ENCODE measurements at regions of chr18 and their contacts with region 1.

Region 1: DNA sequence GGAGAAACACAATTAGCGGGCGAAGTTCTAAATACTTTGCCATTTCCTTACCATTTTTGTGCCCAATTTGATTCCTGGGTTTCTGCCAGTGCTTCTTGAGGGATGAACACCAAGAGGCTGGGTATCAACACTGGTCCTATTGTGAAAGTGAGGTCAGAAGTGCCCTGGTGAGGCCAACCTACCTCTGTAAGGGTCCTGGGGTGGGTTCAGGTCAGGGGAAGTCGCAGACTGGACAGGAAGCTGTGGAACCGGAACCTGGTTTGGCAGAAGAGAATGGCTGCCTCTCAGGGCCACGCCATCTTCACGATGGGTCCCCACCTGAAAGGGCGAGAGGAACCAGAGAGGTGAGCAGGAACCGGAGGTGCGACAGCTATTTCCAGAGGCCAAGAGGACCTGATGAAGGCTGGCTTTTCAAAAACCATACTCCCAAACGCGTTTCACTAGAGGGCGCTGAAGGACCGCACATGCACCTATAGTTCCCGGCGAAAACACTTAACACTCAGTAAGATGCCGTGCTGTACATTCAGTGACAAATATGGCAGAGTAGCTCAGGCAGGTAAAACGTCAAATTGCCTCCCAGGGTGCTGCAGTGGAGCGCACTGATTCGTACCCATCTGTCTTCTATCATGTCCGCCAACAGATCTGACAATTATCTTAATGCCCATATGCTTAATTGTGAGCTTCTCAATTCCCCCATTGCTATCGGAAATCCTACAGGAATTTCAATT is 275.3 kb upstream of the CCDC68 start:
- DNase-seq: no peak
- H3K4me3 ChIP-seq: no peak overlapping the region
- H3K27me3 ChIP-seq: no peaks in the 10 kb centered on the region
- CTCF ChIP-seq: peak; percentile 86

Region 2: DNA sequence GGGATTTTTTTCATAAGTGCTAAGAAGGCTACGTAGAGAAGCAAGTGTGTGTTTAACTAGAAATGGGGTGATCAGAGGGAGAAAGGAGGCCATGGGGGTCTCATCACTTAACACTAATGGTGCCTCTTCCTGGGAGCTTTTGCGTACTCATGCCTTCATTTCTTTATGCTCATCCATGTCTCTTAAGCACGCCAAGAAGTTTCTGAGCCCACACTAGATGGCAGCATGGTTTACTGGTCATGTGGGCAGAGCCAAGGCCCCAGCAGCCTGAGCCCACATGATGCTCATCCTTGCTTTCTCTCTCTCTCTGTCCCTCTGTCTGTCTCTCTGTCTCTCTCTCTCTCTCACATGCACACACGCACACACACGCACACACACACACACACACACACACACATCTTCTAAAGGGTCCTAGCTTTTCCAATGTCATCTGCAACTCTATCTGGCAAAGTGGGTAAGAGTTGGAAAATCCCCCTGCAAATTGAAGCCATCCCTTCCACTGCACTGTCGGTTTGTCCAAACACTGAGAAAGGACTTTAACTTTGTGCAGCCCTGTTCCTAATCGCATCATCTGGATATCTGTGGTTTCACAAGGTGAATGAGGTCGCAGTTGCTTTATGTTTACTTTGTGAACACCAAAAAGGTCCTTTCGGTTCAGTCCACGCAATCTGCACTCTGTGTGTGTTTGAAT is 138.1 kb before region 1 on chr18:
- CTCF ChIA-PET with region 1: interaction called, 13 read pairs
- POLR2A ChIA-PET with region 1: no interaction called
- DNase-seq: peak; percentile 54
- H3K4me3 ChIP-seq: peak overlapping the region; percentile 3; the same call in 1 of the 2 replicates
- H3K27me3 ChIP-seq: 0 out of 2 replicates have a peak, but pooled peaks cover 4% of the 10 kb centered on the region
- CTCF ChIP-seq: peak; percentile 72

Region 3: GRCh38 chr18:55268151-55268601 is 33.6 kb after region 1 on chr18:
- CTCF ChIA-PET with region 1: interaction called, 15 read pairs
- POLR2A ChIA-PET with region 1: no interaction called
- DNase-seq: no peak
- H3K4me3 ChIP-seq: no peak overlapping the region
- H3K27me3 ChIP-seq: no peaks in the 10 kb centered on the region
- CTCF ChIP-seq: no peak

Region 4: DNA sequence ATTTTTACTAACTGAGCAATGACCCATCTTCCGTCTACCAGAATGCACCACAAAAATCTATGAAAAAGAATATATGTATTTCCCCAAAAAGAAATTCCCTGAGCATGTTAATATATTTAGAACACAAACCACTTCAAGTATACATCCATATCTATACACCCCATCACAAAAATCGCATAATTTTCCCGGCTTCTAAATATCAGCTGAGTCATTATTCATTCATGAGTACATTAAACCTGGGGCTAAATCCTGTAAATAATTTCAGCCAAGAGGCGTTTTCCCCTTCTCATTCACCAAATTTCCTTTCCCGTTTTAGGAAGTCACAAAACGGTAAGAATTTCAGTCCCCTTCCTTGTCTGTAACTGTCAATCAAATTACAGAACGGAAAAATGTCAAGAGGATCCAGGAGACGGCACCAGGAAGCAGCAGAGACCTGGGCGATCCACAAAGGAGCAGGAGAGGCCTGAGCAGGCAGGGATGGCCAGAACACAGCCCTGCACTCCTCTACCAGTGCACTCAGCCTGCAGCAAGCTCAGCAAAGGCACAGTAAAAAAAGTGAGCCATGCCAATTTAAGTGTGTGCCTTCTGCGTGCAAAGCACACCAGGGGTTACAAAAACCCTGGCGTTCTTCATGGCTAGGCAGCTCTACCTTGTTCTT is 52.7 kb after region 1 on chr18:
- CTCF ChIA-PET with region 1: interaction called, 12 read pairs
- POLR2A ChIA-PET with region 1: no interaction called
- DNase-seq: no peak
- H3K4me3 ChIP-seq: no peak overlapping the region
- H3K27me3 ChIP-seq: no peaks in the 10 kb centered on the region
- CTCF ChIP-seq: no peak

Region 5: DNA sequence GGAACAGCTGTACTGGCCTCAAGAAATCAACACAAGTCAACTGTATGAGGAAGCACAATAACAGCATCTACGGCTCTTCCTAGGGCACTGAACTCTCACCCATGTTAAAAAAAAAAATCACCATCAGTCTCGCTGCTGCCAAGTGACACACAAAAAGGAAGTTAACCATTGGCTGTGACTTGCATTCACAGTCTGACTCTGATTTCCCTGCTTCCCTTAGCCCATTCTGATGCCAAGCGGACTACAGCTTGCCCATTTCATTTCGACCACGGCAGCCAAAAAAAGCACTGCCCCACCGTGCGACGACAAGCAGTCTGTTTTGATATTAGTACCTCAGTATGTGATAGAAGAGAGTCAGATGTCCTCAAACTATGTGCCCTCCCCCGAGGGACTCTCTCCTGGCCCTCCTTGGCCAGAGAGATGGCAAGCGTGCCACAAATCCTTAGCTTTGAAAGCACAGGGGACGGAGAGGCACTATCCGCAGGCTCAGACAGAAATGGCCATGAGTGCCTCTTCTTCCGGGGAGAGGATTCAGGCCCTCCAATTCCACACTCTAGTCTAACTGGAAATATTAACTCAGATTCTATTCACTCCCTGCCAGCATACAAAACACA is 103.5 kb after region 1 on chr18:
- CTCF ChIA-PET with region 1: interaction called, 11 read pairs
- POLR2A ChIA-PET with region 1: no interaction called
- DNase-seq: no peak
- H3K4me3 ChIP-seq: no peak overlapping the region
- H3K27me3 ChIP-seq: no peaks in the 10 kb centered on the region
- CTCF ChIP-seq: no peak

Region 6: GRCh38 chr18:56575819-56576663 is 1341.5 kb after region 1 on chr18:
- CTCF ChIA-PET with region 1: interaction called, 10 read pairs
- POLR2A ChIA-PET with region 1: no interaction called
- DNase-seq: peak; percentile 11
- H3K4me3 ChIP-seq: no peak overlapping the region
- H3K27me3 ChIP-seq: no peaks in the 10 kb centered on the region
- CTCF ChIP-seq: peak; percentile 58

Measured in BJ (cell line).